A673 (cell line): ENCODE measurements at regions of chr3 and their contacts with region 1.

Region 1: GRCh38 chr3:88408935-88409334 is 259.2 kb downstream of the C3orf38 start:
- DNase-seq: peak; percentile 55
- H3K4me3 ChIP-seq: peak overlapping the region; percentile 9
- H3K27ac ChIP-seq: no peak overlapping the region
- H3K4me1 ChIP-seq: peaks cover 30% of the 10 kb centered on the region
- H3K27me3 ChIP-seq: no peaks in the 10 kb centered on the region
- CTCF ChIP-seq: no peak

Region 2: DNA sequence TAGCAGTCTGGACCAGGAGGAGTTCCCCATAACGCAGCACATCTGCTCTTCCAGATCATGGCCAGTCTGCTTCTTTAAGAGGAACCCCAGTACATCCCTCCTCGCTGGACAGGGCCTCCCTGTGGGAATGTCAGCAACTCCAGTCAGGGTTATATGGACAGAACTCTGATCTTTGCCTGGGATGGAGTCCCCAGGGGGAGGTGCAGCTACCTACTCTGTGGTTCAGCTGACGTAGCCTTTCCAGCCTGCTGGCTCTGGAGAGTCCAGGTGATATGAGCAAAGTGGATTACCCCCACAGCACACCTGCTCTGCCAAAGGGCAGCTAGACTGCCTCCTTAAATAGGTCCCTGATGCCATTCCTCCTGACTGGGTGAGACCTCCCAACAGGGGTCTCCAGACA is 281.4 kb after region 1 on chr3:
- CTCF ChIA-PET with region 1: no interaction called
- POLR2A ChIA-PET with region 1: no interaction called
- intact Hi-C with region 1: loop called (anchors 10 kb)
- DNase-seq: no peak
- H3K4me3 ChIP-seq: no peak overlapping the region
- H3K27ac ChIP-seq: no peak overlapping the region
- H3K4me1 ChIP-seq: no peaks in the 10 kb centered on the region
- H3K27me3 ChIP-seq: no peaks in the 10 kb centered on the region
- CTCF ChIP-seq: no peak